B cell (primary cell): ENCODE measurements at regions of chr12 and their contacts with region 1.

Region 1: DNA sequence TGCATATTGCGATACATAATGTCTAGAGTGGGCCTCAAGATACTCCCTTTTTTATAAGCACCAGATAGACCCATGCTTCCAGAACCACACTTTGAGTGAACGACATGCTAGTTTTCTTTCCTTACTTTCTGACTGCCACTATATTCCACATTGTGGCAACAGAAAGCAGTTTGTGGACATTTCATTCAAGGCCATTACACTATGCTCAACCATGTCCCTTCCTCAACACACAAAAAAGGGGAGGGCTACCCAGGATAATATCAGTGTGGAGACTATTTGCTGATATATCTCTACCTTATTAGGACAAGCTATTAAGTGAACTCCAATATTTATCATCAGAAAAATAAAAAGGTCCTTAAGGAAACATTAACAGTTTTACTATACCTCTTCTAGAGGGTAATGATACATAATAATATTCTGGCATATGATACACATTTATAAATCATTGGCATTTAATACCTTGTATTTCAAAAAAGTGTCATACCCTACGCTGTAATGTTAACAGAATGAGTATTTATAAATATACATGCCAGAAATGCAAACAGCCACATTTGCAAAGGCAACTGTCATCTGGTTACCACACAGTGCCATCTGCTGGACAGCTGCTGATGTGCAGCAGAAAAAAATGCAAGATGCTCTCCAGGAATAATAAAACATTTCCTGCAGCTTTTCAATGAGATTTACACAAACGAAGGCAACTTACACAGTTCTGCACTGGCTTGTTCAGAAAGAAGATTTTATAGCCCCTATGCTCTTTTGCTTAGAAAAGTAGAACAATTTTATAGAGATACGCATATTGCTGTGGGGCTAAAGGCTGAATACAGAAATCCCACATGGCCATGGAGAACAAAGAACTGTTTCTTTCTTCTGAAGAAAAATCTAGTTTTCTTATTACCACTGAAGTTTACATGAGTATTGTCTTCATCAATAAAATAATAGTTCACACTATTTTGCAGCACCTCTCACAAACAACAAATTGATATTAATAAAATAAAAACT is 182.2 kb upstream of the GRIP1 start:
- DNase-seq: peak; percentile 66
- ATAC-seq: peak; percentile 39
- H3K4me3 ChIP-seq: no peak overlapping the region
- H3K4me3 Mint-ChIP-seq: no peak overlapping the region
- H3K27ac ChIP-seq: no peak overlapping the region
- H3K27ac Mint-ChIP-seq: no peak overlapping the region
- H3K4me1 ChIP-seq: no peaks in the 10 kb centered on the region
- H3K4me1 Mint-ChIP-seq: no peaks in the 10 kb centered on the region
- H3K27me3 ChIP-seq: peaks cover 0 to 4% (median 2%) of the 10 kb centered on the region in 4 experiments
- H3K27me3 Mint-ChIP-seq: peaks cover 17% of the 10 kb centered on the region
- CTCF ChIP-seq: peak; percentile 98

Region 2: DNA sequence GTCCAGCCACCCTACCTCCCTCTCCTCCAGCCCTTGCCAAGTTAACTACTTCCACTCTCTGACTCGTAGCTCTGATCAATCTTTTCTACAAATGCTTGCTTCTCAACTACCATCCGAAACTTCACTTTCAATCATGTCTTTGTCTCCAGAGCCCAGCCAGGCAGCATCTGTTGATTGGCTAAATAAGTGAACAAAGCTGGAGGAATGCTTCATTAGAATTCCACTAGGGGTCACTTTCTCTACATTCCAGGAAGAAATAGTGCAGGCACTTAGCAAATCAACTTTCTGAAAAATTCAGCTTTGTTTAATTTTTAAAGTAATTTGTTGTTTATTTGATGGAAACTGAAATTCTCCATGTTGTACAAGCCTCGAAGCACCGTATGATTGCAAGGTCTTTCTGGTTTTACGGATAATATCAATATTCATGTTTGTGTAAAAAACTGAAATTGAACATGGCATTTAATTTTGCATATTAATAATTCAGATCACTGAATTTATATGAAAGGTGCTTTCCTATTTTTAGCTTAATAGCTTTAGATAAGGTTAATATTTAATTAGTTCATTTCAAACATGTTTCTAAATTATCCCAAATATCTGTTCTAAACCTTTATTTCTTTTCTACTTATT is 591.2 kb before region 1 on chr12:
- CTCF ChIA-PET with region 1: interaction called, 3 read pairs
- POLR2A ChIA-PET with region 1: no interaction called
- intact Hi-C with region 1: loop called (anchors 1 kb)
- DNase-seq: peak; percentile 42
- ATAC-seq: peak; percentile 31
- H3K4me3 ChIP-seq: no peak overlapping the region
- H3K4me3 Mint-ChIP-seq: no peak overlapping the region
- H3K27ac ChIP-seq: no peak overlapping the region
- H3K27ac Mint-ChIP-seq: no peak overlapping the region
- H3K4me1 ChIP-seq: peaks cover 0 to 6% of the 10 kb centered on the region in 2 donors
- H3K4me1 Mint-ChIP-seq: no peaks in the 10 kb centered on the region
- H3K27me3 ChIP-seq: no peaks in the 10 kb centered on the region
- H3K27me3 Mint-ChIP-seq: peaks cover 4% of the 10 kb centered on the region
- CTCF ChIP-seq: peak; percentile 65

Region 3: GRCh38 chr12:66688846-66689439 is 172.1 kb before region 1 on chr12:
- CTCF ChIA-PET with region 1: interaction called, 14 read pairs
- POLR2A ChIA-PET with region 1: no interaction called
- intact Hi-C with region 1: loop called (anchors 1 kb)
- DNase-seq: peak; percentile 55
- ATAC-seq: peak; percentile 61
- H3K4me3 ChIP-seq: no peak overlapping the region
- H3K4me3 Mint-ChIP-seq: no peak overlapping the region
- H3K27ac ChIP-seq: no peak overlapping the region
- H3K27ac Mint-ChIP-seq: no peak overlapping the region
- H3K4me1 ChIP-seq: peaks cover 7 to 10% of the 10 kb centered on the region in 2 donors
- H3K4me1 Mint-ChIP-seq: peaks cover 23% of the 10 kb centered on the region
- H3K27me3 ChIP-seq: no peaks in the 10 kb centered on the region
- H3K27me3 Mint-ChIP-seq: no peaks in the 10 kb centered on the region
- CTCF ChIP-seq: peak; percentile 50